ENCODE measurements at regions of chr12 and their contacts with region 1.

Region 1: GRCh38 chr12:100200463-100201181 is at the start of gene ACTR6:
- DNase-seq: peak; percentile 95
- H3K4me3 Mint-ChIP-seq: peak within 1 kb of the TSS; percentile 98
- H3K27ac Mint-ChIP-seq: peak within 1 kb of the TSS; percentile 100
- H3K4me1 Mint-ChIP-seq: peaks cover 20% of the 10 kb centered on the region
- H3K27me3 Mint-ChIP-seq: no peaks in the 10 kb centered on the region
- total RNA-seq, gene ACTR6: 40.4 and 42.1 TPM in 2 replicates

Region 2: DNA sequence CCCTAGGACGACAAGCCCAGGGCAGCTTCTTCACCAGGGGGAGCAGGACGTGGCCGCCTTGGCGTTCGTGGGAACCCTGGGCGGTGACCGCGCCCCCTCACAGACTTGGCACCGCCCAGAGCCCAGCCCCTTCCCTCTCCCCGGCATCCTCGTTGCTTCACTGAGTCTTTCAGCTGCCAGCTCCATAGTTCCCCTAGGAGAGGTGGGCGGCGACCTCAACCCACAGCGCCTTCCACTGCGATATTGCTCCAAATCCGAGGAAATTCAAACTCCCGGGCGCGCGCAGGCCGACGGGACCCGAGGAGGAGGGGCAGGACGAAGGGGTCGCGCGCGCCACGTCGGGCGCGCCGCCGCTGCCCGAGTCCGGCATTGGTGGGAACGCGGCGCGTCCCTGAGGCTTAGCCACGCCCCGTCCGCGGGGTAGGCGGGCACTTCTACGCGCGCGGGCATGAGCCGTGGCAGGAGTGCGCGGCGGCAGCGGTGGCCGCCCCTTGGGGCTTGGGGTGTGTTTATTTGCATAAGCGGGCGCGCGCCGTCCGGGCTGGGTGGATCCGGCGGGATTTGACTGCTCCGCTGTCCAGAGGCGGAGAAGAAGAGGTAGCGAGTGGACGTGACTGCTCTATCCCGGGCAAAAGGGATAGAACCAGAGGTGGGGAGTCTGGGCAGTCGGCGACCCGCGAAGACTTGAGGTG is 1555.8 kb before region 1 on chr12 and contains the starts of genes APAF1 and IKBIP:
- intact Hi-C with region 1: loop called (anchors 2 kb)
- DNase-seq: peak; percentile 94
- H3K4me3 Mint-ChIP-seq: peak within 1 kb of the TSS; percentile 97
- H3K27ac Mint-ChIP-seq: peak within 1 kb of the TSS; percentile 98
- H3K4me1 Mint-ChIP-seq: peaks cover 32% of the 10 kb centered on the region
- H3K27me3 Mint-ChIP-seq: no peaks in the 10 kb centered on the region
- total RNA-seq, gene APAF1: 28.3 and 31.2 TPM in 2 replicates
- total RNA-seq, gene IKBIP: 39.9 and 41.1 TPM in 2 replicates

Region 3: DNA sequence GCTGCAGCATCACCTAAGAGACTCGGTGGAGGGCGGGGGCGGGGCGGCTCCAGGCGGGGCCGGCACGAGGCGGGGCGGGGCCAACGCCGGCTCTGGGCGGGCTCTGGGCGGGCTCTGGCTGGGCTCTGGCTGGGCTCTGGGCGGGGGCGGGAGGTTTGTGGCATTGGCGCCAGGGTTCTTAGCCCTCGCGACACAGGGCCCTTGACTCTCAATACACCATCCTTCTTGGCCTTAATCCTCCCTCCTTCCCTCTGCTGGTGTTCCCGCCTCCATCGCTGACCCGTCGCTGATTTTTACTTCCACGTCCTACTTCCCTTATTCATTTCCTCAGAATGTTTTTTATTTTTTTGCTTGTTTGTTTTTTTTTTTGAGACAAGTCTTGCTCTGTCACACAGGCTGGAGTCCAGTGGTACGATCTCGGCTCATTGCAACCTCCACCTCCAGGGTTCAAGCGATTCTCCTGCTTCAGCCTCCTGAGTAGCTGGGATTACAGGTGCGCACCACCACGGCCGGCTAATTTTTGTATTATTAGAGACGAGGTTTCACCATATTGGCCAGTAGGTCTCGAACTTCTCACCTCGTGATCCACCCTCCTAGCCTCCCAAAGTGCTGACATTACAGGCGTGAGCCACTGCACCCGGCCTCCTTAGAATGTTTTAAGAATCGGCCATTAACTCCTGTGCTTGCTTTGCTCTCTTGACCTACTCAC is 57.6 kb before region 1 on chr12 and contains the start of gene BLTP3B:
- intact Hi-C with region 1: loop called (anchors 1 kb)
- DNase-seq: peak; percentile 82
- H3K4me3 Mint-ChIP-seq: peak within 1 kb of the TSS; percentile 94
- H3K27ac Mint-ChIP-seq: peak within 1 kb of the TSS; percentile 98
- H3K4me1 Mint-ChIP-seq: peaks cover 36% of the 10 kb centered on the region
- H3K27me3 Mint-ChIP-seq: no peaks in the 10 kb centered on the region
- total RNA-seq, gene BLTP3B: 69.0 and 73.2 TPM in 2 replicates

Region 4: GRCh38 chr12:100185361-100185894 is 15.2 kb before region 1 on chr12:
- intact Hi-C with region 1: loop called (anchors 2 kb)
- DNase-seq: no peak
- H3K4me3 Mint-ChIP-seq: no peak overlapping the region
- H3K27ac Mint-ChIP-seq: peak overlapping the region; percentile 68
- H3K4me1 Mint-ChIP-seq: peaks cover 37% of the 10 kb centered on the region
- H3K27me3 Mint-ChIP-seq: no peaks in the 10 kb centered on the region

Region 5: GRCh38 chr12:100215209-100215608 is 14.6 kb after region 1 on chr12:
- intact Hi-C with region 1: no loop called
- DNase-seq: no peak
- H3K4me3 Mint-ChIP-seq: no peak overlapping the region
- H3K27ac Mint-ChIP-seq: no peak overlapping the region
- H3K4me1 Mint-ChIP-seq: peaks cover 2% of the 10 kb centered on the region
- H3K27me3 Mint-ChIP-seq: no peaks in the 10 kb centered on the region

Measured in activated T-helper 2 cell treated with anti-CD3 and anti-CD28 coated beads, Interferon-gamma antibody, Interleukin-2, Interleukin-4, amounts not matched to agents 10 μg/mL and 5 μg/mL and 100 μg/mL, durations not matched to agents 14 hours and 24 hours and 36 hours (primary cell).